Activated B cell treated with CpG ODN at 0.5 μM for 24 hours (primary cell): ENCODE measurements at regions of chr19 and their contacts with region 1.

Region 1: DNA sequence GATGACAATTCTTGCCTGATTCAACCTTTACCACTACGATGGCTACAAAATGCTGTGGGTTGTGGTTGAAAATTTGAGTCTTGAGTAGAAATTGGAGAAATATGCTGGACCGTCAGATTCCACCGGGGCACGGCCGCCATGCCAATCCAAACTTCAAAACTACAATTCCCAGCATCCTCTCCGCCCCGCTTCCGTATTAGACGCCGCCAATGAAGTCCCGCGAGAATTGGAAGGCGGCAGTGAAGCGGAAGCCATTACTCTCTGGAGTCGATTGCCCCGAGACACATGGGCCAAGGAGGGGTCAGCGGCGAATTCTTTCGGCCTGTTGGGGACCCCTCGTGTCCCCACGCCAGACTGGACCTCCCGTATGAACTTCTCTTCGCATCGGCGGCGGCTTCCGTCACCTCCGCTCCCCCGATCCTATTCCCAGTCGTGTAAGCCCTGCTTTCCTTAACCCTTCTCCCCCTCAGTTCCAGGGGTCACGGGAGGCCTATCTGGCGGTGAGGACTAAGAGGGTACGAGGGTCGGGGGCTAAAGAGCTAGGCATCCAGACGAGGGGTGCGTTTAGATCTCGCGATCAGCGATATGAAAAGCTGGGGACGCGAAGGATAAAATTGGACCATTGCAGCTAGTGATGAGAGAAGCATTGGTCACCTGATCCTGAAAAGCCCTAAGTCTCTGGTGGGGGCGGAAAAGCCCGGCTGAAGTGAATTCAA is at the start of gene ZNF317:
- DNase-seq: peak; percentile 74
- ATAC-seq: peak; percentile 93
- H3K4me3 Mint-ChIP-seq: peak within 1 kb of the TSS; percentile 99
- H3K27ac Mint-ChIP-seq: peak within 1 kb of the TSS; percentile 98
- H3K4me1 Mint-ChIP-seq: peaks cover 42% of the 10 kb centered on the region
- H3K27me3 Mint-ChIP-seq: peaks cover 3% of the 10 kb centered on the region
- CTCF ChIP-seq: no peak
- total RNA-seq, gene ZNF317: 64.4 and 65.8 TPM in 2 replicates

Region 2: DNA sequence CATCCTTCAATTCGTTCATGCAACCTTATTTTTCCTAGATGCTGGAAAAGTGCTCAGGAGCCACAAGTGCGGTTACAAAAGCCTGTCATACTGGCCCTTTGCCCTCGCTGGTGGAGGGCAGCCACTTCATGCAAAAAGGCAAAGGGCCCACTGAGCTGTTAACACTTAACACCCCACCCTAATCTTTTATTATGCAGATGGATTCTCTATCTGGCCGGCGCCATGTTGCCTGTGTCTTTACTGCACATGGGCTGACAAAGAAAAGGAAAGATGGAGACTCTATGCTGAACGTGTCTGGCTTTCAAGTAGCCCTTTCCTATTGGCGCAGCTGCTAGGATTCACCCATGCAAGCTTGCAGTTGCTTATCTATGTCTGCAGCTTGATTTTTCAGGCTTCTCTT is 49.2 kb after region 1 on chr19:
- CTCF ChIA-PET with region 1: no interaction called
- POLR2A ChIA-PET with region 1: no interaction called
- intact Hi-C with region 1: no loop called
- DNase-seq: no peak
- ATAC-seq: no peak
- H3K4me3 Mint-ChIP-seq: no peak overlapping the region
- H3K27ac Mint-ChIP-seq: no peak overlapping the region
- H3K4me1 Mint-ChIP-seq: no peaks in the 10 kb centered on the region
- H3K27me3 Mint-ChIP-seq: peaks cover 10% of the 10 kb centered on the region
- CTCF ChIP-seq: no peak

Region 3: GRCh38 chr19:9205501-9206113 is 65.3 kb after region 1 on chr19:
- CTCF ChIA-PET with region 1: interaction called, 4 read pairs
- POLR2A ChIA-PET with region 1: no interaction called
- intact Hi-C with region 1: loop called (anchors 1 kb)
- DNase-seq: peak; percentile 54
- ATAC-seq: peak; percentile 66
- H3K4me3 Mint-ChIP-seq: peak overlapping the region; percentile 66
- H3K27ac Mint-ChIP-seq: no peak overlapping the region
- H3K4me1 Mint-ChIP-seq: peaks cover 7% of the 10 kb centered on the region
- H3K27me3 Mint-ChIP-seq: peaks cover 8% of the 10 kb centered on the region
- CTCF ChIP-seq: peak; percentile 72

Region 4: DNA sequence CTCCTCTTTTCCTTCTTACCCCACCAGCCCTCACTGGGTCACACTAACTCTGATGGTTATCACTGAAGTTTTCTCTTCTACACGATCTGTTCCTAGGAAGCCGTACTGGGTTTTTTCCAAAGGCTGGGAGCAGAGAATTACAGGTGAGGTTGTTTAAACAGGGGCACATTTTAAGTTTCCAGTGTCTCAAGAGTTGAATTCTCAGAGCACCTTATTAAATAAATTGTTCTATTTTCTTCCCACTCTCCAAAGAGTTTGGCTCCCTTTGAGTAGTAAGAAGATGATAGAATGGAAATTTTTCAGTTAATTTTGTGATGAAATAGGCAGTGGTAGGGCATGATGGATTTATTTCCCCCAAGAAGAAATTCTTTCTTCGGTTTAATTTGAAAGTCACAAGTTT is 79.2 kb after region 1 on chr19 and contains the start of gene OR7D4:
- CTCF ChIA-PET with region 1: no interaction called
- POLR2A ChIA-PET with region 1: no interaction called
- intact Hi-C with region 1: no loop called
- DNase-seq: no peak
- ATAC-seq: no peak
- H3K4me3 Mint-ChIP-seq: no peak within 1 kb of the TSS
- H3K27ac Mint-ChIP-seq: no peak within 1 kb of the TSS
- H3K4me1 Mint-ChIP-seq: no peaks in the 10 kb centered on the region
- H3K27me3 Mint-ChIP-seq: peaks cover 3% of the 10 kb centered on the region
- CTCF ChIP-seq: no peak
- total RNA-seq, gene OR7D4: not detected in 2 replicates

Region 5: DNA sequence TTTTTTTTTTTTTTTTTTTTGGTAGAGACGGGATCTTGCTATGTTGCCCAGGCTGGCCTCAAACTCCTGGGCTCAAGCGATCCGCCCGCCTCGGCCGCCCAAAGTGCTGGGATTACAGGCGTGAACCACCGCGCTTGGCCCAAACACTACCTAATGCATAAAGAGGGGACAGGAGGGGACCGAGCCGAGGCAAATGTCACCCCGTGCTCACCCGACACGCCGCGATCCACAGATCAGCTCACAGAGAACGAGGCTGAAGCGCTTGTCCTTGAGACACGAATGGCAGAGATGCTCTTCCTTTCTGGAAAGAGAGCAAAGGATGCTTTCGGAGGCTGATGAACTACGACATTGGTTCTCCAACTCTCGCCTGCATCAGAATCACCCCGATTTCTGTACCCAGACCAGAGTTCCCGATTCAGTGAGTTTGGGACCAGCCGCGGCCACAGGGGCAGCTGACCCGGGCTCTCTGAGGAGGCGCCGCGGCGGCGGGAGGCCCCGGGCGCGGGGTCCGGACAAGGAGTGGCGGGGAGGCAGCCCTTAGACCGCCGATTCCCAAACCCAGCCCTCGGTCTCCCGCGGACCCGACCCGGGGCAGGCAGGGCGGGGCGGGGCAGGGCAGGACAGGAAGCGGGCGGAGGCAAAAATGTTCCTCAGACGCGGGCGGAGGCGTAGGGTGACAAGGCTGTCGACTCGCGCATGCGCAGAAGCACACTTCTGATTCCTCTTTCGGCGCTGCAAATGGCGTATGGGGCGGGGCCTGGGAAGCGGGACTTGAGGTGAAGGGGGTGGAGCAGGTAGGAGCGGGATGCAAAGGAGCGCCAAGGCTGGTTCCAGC is 169.0 kb after region 1 on chr19 and contains the start of gene ZNF699:
- CTCF ChIA-PET with region 1: no interaction called
- POLR2A ChIA-PET with region 1: no interaction called
- intact Hi-C with region 1: loop called (anchors 1 kb)
- DNase-seq: peak; percentile 94
- ATAC-seq: peak; percentile 88
- H3K4me3 Mint-ChIP-seq: peak within 1 kb of the TSS; percentile 96
- H3K27ac Mint-ChIP-seq: peak within 1 kb of the TSS; percentile 98
- H3K4me1 Mint-ChIP-seq: peaks cover 24% of the 10 kb centered on the region
- H3K27me3 Mint-ChIP-seq: no peaks in the 10 kb centered on the region
- CTCF ChIP-seq: no peak
- total RNA-seq, gene ZNF699: 10.3 and 11.7 TPM in 2 replicates

Region 6: DNA sequence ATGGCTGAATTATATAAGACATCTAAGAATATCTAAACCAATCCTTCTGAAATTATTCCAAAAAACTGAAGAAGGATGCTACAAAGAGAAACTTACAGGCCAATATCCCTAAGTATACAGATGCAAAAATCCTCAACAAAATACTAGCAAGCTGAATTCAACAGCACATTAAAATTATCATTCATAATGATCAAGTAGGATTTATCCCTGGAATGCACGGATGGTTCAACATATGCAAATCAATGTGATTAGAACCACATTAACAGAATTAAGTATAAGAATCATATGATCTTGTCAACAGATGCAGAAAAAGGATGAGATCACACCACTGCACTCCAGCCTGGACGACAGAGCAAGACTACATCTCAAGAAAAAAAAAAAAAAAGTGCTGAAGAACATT is 344.8 kb after region 1 on chr19:
- CTCF ChIA-PET with region 1: no interaction called
- POLR2A ChIA-PET with region 1: no interaction called
- intact Hi-C with region 1: no loop called
- DNase-seq: no peak
- ATAC-seq: no peak
- H3K4me3 Mint-ChIP-seq: no peak overlapping the region
- H3K27ac Mint-ChIP-seq: no peak overlapping the region
- H3K4me1 Mint-ChIP-seq: no peaks in the 10 kb centered on the region
- H3K27me3 Mint-ChIP-seq: no peaks in the 10 kb centered on the region
- CTCF ChIP-seq: no peak

Region 7: GRCh38 chr19:9538183-9539058 is 398.1 kb after region 1 on chr19 and contains the start of gene ZNF426:
- CTCF ChIA-PET with region 1: no interaction called
- POLR2A ChIA-PET with region 1: no interaction called
- intact Hi-C with region 1: loop called (anchors 5 kb)
- DNase-seq: peak; percentile 79
- ATAC-seq: peak; percentile 92
- H3K4me3 Mint-ChIP-seq: peak within 1 kb of the TSS; percentile 98
- H3K27ac Mint-ChIP-seq: peak within 1 kb of the TSS; percentile 99
- H3K4me1 Mint-ChIP-seq: peaks cover 26% of the 10 kb centered on the region
- H3K27me3 Mint-ChIP-seq: no peaks in the 10 kb centered on the region
- CTCF ChIP-seq: no peak
- total RNA-seq, gene ZNF426: 18.8 and 22.7 TPM in 2 replicates

Region 8: GRCh38 chr19:9584073-9584833 is 443.9 kb after region 1 on chr19 and contains the start of gene ZNF121:
- CTCF ChIA-PET with region 1: no interaction called
- POLR2A ChIA-PET with region 1: no interaction called
- intact Hi-C with region 1: loop called (anchors 1 kb)
- DNase-seq: peak; percentile 80
- ATAC-seq: peak; percentile 84
- H3K4me3 Mint-ChIP-seq: peak within 1 kb of the TSS; percentile 95
- H3K27ac Mint-ChIP-seq: peak within 1 kb of the TSS; percentile 94
- H3K4me1 Mint-ChIP-seq: peaks cover 46% of the 10 kb centered on the region
- H3K27me3 Mint-ChIP-seq: peaks cover 6% of the 10 kb centered on the region
- CTCF ChIP-seq: no peak
- total RNA-seq, gene ZNF121: 53.7 and 57.0 TPM in 2 replicates